Activated T-helper 1 cell treated with anti-CD3 and anti-CD28 coated beads, Interleukin-12 subunit alpha, Interleukin-12 subunit beta, Interleukin-2, Interleukin-4 antibody, amounts not matched to agents 30 ng/mL and 10 ng/mL and 1 ng/mL, durations not matched to agents 14 hours and 24 hours and 36 hours (primary cell): ENCODE measurements at regions of chr2 and their contacts with region 1.

Region 1: DNA sequence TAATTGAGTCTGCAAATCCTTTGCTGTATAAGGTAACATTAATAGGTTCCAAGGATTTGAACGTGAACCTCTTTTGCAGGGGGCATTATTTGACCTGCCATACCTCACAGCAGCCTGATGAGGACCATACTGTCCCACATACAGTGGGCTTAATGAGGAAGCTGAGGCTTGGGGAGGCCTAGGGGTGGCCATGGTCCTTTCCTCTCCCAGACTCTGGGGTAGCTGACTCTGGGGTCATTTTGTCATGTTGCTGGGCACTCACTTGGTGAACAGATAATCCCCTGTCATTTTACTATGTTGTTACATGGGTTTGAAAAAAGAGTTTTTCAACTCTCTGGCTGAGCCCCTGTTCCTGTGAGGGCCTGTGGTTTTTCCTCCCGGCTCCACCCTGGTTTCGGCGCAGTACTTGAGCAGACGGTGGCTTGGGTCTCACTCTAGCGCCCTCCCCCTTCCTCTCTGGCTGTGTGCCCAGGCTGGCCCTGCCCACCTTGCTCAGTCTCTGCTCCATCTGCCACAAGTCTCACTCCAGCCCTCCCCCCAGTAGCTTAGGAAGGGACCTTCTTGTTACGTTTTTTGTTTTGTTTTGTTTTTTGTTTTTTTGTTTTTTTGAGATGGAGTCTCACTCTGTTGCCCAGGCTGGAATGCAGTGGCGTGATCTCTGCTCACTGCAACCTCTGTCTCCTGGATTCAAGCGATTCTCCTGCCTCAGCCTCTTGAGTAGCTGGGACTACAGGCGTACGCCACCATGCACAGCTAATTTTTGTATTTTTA is 21.0 kb downstream of the INPP4A start:
- DNase-seq: peak; percentile 70
- H3K4me3 Mint-ChIP-seq: peak overlapping the region; percentile 84
- H3K27ac Mint-ChIP-seq: peak overlapping the region; percentile 99
- H3K4me1 Mint-ChIP-seq: peaks cover 83% of the 10 kb centered on the region
- H3K27me3 Mint-ChIP-seq: no peaks in the 10 kb centered on the region

Region 2: DNA sequence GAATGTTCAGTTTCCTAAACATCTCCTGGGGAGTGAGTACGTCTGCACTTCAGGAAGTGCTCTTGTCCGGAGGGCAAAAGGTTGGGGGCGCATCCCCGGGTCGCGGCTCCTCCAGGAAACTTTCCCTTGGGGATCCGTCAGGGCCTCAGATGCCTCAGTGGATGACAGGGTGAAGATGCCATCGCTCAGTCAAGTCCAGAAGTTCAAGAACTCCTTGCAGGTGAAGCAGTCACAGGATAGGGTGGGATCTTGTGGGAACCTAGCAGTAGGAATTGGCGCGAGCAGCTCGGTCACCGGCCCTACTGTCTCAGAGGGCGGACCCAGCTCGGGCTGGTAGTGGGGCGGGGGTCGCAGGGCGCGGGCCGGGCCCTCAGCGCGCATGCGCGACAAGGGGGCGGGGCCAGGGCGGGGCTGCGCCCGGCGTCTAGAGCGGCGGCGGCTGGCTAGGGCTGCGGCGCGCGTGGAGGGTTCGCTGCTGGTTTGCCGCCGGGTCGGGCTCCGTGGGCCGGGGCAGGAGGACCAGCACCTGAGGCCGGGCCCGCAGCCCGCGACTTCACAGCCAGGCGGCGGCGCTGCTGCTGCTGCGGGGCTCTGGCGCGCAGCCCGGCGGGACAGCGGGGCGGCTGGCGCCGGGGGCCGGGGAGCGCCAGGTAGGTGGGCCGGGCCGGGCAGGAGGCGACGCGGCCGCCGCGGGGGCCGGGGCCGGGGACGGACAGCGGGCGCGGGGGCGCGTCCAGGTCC is 21.0 kb before region 1 on chr2 and contains the start of gene INPP4A:
- intact Hi-C with region 1: loop called (anchors 1 kb)
- DNase-seq: peak; percentile 71
- H3K4me3 Mint-ChIP-seq: peak within 1 kb of the TSS; percentile 95
- H3K27ac Mint-ChIP-seq: peak within 1 kb of the TSS; percentile 93
- H3K4me1 Mint-ChIP-seq: peaks cover 56% of the 10 kb centered on the region
- H3K27me3 Mint-ChIP-seq: no peaks in the 10 kb centered on the region
- total RNA-seq, gene INPP4A: 54.6 and 55.7 TPM in 2 replicates

Region 3: DNA sequence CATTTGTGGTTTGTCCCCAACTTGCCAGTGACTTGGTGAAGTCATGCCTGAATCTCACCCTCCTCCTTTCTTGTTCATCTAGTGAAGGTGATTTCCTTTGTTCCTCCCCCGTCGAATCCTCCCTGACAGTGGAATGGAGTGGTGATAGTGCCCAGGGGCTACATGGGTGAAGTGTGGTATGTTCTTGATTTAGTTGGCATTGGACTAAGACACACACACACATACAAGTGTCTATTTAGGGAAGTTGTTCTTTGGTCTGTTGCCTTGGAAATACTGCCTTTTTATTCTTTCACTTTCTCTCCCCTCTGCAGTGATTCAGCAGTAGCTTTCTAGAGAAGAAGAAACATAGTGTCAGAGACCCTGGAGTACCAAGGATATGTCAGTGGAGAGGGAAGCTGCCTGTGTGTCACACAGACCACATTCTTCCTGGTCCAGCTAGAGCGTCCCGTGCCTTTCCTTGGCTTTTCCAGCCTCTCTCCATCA is 10.1 kb before region 1 on chr2:
- intact Hi-C with region 1: loop called (anchors 1 kb)
- DNase-seq: no peak
- H3K4me3 Mint-ChIP-seq: peak overlapping the region; percentile 68
- H3K27ac Mint-ChIP-seq: peak overlapping the region; percentile 98
- H3K4me1 Mint-ChIP-seq: peaks cover 97% of the 10 kb centered on the region
- H3K27me3 Mint-ChIP-seq: no peaks in the 10 kb centered on the region

Region 4: DNA sequence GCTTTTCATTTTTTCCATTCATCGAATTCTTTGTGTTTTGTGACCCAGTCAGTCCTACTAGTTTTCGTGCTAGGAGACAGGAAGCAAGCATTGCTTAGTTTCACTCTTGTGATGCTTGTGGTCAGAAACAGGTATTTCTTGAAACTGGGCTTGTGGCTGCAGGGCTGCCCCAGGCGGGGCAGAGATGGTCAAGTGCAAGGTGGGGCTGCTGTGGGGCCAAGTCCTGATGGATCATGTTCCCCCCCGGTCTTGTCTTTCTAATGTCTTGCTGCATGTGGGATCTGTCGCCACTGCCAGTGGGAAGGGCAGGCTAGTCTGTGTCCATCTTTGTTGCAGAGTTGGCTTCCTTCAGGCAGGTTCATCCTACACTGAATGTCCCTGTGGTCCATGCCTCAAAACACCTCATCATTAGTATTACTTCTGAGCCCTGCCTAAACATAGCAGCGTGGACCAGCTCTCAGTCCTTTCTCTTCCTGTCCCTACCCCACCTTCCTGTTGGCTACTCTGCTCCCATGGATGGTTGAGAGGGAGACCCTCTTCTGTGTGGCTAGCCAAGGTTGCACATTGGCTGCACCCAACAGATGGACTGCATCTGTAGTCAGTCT is 17.7 kb after region 1 on chr2:
- intact Hi-C with region 1: loop called (anchors 1 kb)
- DNase-seq: no peak
- H3K4me3 Mint-ChIP-seq: peak overlapping the region; percentile 68
- H3K27ac Mint-ChIP-seq: peak overlapping the region; percentile 87
- H3K4me1 Mint-ChIP-seq: peaks cover 99% of the 10 kb centered on the region
- H3K27me3 Mint-ChIP-seq: no peaks in the 10 kb centered on the region

Region 5: GRCh38 chr2:98508709-98509066 is 43.0 kb after region 1 on chr2:
- intact Hi-C with region 1: loop called (anchors 2 kb)
- DNase-seq: peak; percentile 43
- H3K4me3 Mint-ChIP-seq: peak overlapping the region; percentile 31
- H3K27ac Mint-ChIP-seq: peak overlapping the region; percentile 91
- H3K4me1 Mint-ChIP-seq: peaks cover 77% of the 10 kb centered on the region
- H3K27me3 Mint-ChIP-seq: no peaks in the 10 kb centered on the region

Region 6: GRCh38 chr2:98548920-98549818 is 83.5 kb after region 1 on chr2:
- intact Hi-C with region 1: loop called (anchors 5 kb)
- DNase-seq: no peak
- H3K4me3 Mint-ChIP-seq: peak overlapping the region; percentile 9
- H3K27ac Mint-ChIP-seq: peak overlapping the region; percentile 35
- H3K4me1 Mint-ChIP-seq: peaks cover 72% of the 10 kb centered on the region
- H3K27me3 Mint-ChIP-seq: no peaks in the 10 kb centered on the region

Region 7: GRCh38 chr2:98731041-98731893 is 265.6 kb after region 1 on chr2 and contains the start of gene MGAT4A:
- intact Hi-C with region 1: loop called (anchors 10 kb)
- DNase-seq: peak; percentile 82
- H3K4me3 Mint-ChIP-seq: peak within 1 kb of the TSS; percentile 91
- H3K27ac Mint-ChIP-seq: peak within 1 kb of the TSS; percentile 87
- H3K4me1 Mint-ChIP-seq: peaks cover 80% of the 10 kb centered on the region
- H3K27me3 Mint-ChIP-seq: no peaks in the 10 kb centered on the region
- total RNA-seq, gene MGAT4A: 47.0 and 49.7 TPM in 2 replicates

Region 8: DNA sequence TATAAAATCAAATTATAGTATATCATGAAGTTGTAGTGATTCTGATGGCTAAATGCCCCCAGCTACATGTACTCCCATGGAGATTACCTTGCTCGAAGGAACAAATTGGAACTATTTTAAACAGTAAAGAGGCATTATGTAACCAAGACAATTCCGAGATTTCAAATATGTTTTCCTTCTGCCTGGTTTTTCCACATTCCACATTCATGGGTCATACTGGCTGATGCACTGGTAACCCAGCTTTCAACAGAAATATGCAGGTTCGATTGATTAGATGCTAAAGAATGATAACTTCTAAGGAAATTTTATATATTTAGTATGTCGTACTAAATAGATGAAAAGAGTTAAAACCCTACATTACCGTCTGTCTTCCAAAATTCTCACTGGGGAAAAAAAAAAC is 327.7 kb after region 1 on chr2:
- intact Hi-C with region 1: no loop called
- DNase-seq: no peak
- H3K4me3 Mint-ChIP-seq: no peak overlapping the region
- H3K27ac Mint-ChIP-seq: no peak overlapping the region
- H3K4me1 Mint-ChIP-seq: peaks cover 5% of the 10 kb centered on the region
- H3K27me3 Mint-ChIP-seq: peaks cover 5% of the 10 kb centered on the region